ENCODE measurements at regions of chr18 and their contacts with region 1.

Region 1: GRCh38 chr18:21463718-21464117 is 136.8 kb downstream of the ESCO1 start:
- DNase-seq: no peak
- H3K4me3 ChIP-seq: no peak overlapping the region
- H3K27ac ChIP-seq: no peak overlapping the region
- H3K4me1 ChIP-seq: no peaks in the 10 kb centered on the region
- CTCF ChIP-seq: no peak

Region 2: GRCh38 chr18:21230436-21230835 is 233.3 kb before region 1 on chr18:
- CTCF ChIA-PET with region 1: no interaction called
- POLR2A ChIA-PET with region 1: no interaction called
- intact Hi-C with region 1: loop called (anchors 10 kb)
- DNase-seq: no peak
- H3K4me3 ChIP-seq: no peak overlapping the region
- H3K27ac ChIP-seq: no peak overlapping the region
- H3K4me1 ChIP-seq: no peaks in the 10 kb centered on the region
- CTCF ChIP-seq: no peak

Region 3: DNA sequence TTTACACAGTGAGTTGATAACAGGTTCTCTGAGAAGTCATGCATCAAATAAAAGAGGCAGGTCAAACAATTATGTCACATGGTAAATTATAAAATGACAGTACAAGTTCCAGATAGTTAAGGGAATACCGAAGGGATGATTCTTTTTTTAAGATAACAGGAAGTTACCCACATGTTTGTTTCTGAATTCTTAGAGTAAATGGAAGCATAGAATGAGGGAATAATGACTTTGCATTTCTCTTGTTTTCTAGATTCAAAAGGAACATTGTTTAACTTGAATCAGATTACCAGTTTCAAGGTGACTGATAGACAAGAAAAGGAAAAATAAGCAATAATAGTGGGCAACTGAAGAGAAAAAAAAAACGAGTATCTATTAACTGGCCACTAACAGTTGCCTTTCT is 401.3 kb after region 1 on chr18:
- CTCF ChIA-PET with region 1: no interaction called
- POLR2A ChIA-PET with region 1: no interaction called
- intact Hi-C with region 1: loop called (anchors 10 kb)
- DNase-seq: no peak
- H3K4me3 ChIP-seq: no peak overlapping the region
- H3K27ac ChIP-seq: no peak overlapping the region
- H3K4me1 ChIP-seq: no peaks in the 10 kb centered on the region
- CTCF ChIP-seq: no peak